ENCODE measurements at regions of chr11 and their contacts with region 1.

Region 1: DNA sequence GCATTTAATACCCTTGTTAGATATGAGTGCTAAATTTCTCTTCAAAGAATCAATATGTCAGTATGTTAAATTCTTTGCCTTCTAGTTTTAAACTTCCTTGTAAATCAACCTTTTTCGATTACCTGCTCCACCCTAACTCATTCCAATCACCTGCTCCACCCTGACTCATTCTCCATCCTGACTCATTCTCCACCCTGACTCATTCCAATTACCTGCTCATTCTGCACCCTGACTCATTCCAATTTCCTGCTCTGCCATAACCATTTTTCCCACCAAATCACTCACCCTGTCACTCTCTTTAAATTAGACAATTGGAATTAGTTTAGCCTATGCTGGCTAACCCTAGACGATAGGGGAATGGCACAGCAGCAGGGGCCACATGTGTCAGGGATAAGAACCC is 519.5 kb upstream of the LRRC4C start:
- DNase-seq: no peak
- H3K4me3 ChIP-seq: no peak overlapping the region
- H3K27ac ChIP-seq: no peak overlapping the region
- H3K4me1 ChIP-seq: no peaks in the 10 kb centered on the region
- H3K27me3 ChIP-seq: no peaks in the 10 kb centered on the region
- CTCF ChIP-seq: no peak
- EP300 ChIP-seq: no peak
- POLR2A ChIP-seq: no peak

Region 2: GRCh38 chr11:41879214-41879613 is 99.7 kb before region 1 on chr11:
- in situ Hi-C with region 1: loop called in 1 of 4 experiments (anchors 25 kb)
- intact Hi-C with region 1: no loop called
- DNase-seq: no peak
- H3K4me3 ChIP-seq: no peak overlapping the region
- H3K27ac ChIP-seq: no peak overlapping the region
- H3K4me1 ChIP-seq: no peaks in the 10 kb centered on the region
- H3K27me3 ChIP-seq: no peaks in the 10 kb centered on the region
- CTCF ChIP-seq: no peak
- EP300 ChIP-seq: no peak
- POLR2A ChIP-seq: no peak